ENCODE measurements at regions of chr9 and their contacts with region 1.

Region 1: GRCh38 chr9:129495534-129496325 is 125.2 kb downstream of the C9orf50 start:
- DNase-seq: peak; percentile 85
- H3K4me3 ChIP-seq: peak overlapping the region in 2 of 3 experiments; percentile 26 to 37
- H3K27ac ChIP-seq: peak overlapping the region; percentile 72
- H3K4me1 ChIP-seq: peaks cover 31% of the 10 kb centered on the region
- H3K27me3 ChIP-seq: no peaks in the 10 kb centered on the region
- CTCF ChIP-seq: no peak
- POLR2A ChIP-seq: no peak

Region 2: DNA sequence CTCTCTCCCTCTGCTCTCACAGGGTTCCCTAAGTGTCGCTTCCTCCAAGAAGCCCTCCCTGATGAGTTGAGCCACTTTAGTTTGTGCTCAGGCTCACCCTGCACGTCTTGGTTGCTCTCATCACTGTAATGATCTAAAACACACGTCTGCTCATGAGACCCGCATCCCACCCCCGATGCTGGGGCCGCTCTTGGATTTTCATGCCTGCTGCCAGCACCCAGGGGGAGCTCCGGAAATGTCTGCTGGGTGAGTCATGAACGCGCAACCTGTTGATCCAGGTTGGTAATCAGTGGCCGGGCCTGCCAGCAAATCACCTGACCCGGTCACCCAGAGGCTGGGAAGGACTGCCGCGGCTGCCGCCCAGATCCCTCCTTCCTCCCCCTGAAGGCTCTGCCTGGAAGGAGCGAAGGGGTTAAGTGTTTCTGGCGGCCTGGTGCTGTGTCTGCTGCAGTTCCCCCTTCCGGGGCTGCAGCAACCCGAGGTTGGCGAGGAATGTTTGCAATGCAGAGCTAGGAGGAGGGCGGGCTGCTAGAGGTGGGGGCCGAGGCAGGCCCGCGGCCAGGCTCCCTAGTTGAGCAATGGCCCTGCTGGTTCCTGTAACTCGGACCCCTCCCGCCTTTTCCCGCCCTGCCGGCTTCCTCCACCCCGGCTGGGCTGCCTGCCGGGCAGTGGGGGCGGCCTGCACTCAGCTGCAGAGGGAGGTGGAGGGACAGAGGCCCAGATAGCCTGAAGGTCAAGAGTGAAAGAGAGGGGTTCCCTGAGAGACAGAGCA is 161.6 kb before region 1 on chr9:
- CTCF ChIA-PET with region 1: no interaction called
- POLR2A ChIA-PET with region 1: interaction called, 4 read pairs
- dilution Hi-C with region 1: no loop called
- intact Hi-C with region 1: loop called (anchors 1 kb)
- DNase-seq: peak; percentile 49
- H3K4me3 ChIP-seq: no peak overlapping the region
- H3K27ac ChIP-seq: peak overlapping the region; percentile 20
- H3K4me1 ChIP-seq: peaks cover 19% of the 10 kb centered on the region
- H3K27me3 ChIP-seq: no peaks in the 10 kb centered on the region
- CTCF ChIP-seq: no peak
- POLR2A ChIP-seq: no peak

Region 3: GRCh38 chr9:129413537-129414376 is 82.0 kb before region 1 on chr9:
- CTCF ChIA-PET with region 1: no interaction called
- POLR2A ChIA-PET with region 1: no interaction called
- dilution Hi-C with region 1: no loop called
- intact Hi-C with region 1: loop called (anchors 2 kb)
- DNase-seq: peak; percentile 95
- H3K4me3 ChIP-seq: peak overlapping the region in 1 of 3 experiments; percentile 35
- H3K27ac ChIP-seq: peak overlapping the region; percentile 96
- H3K4me1 ChIP-seq: peaks cover 15% of the 10 kb centered on the region
- H3K27me3 ChIP-seq: no peaks in the 10 kb centered on the region
- CTCF ChIP-seq: no peak
- POLR2A ChIP-seq: peak; percentile 70

Region 4: DNA sequence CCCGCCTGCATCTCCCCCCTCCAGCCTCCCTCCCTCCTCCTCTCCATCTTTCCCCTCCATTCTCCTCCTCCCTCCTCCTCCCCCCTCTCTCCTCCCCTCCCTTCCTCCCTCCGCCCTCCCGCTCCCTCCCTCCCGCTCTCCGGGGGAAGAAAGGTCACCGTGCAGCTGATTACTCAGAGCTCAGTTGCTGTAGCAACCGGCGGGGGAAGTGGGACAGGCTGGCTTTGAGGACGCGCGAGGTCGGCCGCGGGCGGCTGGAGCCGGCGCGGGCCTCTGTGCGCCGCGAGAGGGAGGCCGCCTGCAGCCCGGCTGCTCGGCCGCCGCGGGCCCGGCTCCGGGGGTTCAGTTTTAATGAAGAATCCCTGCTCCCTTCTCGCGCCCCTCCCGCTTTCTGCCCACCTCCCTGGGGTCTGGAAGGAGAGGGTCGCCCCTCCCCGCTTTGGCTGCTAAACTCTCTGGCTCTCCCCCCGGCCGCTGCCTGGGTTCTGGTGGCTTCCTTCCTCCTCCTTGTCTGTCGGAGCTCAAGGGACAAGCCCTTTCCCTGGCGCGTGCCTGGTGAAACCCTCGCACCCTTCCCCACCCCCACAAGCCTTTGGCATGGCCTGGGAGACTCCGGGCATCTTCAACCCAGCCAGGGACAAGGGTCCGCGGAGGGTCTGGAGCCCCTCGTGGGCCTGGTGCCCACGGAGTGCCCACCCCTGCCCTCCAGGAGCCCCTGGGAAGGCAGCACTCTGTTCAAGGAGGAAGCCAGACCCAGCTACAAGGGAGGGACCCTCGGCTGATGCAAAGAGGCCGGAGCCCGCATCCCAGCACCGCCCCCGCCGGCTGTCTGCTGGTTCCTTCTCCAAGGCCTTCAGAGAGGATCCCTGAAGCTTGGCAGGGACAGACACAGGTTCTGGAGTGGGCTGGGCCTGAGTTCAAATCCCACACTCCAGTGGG is 35.1 kb before region 1 on chr9:
- CTCF ChIA-PET with region 1: interaction called, 10 read pairs
- POLR2A ChIA-PET with region 1: interaction called, 4 read pairs
- dilution Hi-C with region 1: no loop called
- intact Hi-C with region 1: no loop called
- DNase-seq: peak; percentile 96
- H3K4me3 ChIP-seq: peak overlapping the region in 2 of 3 experiments; percentile 16 to 18
- H3K27ac ChIP-seq: peak overlapping the region; percentile 98
- H3K4me1 ChIP-seq: peaks cover 11% of the 10 kb centered on the region
- H3K27me3 ChIP-seq: no peaks in the 10 kb centered on the region
- CTCF ChIP-seq: no peak
- POLR2A ChIP-seq: no peak

Region 5: DNA sequence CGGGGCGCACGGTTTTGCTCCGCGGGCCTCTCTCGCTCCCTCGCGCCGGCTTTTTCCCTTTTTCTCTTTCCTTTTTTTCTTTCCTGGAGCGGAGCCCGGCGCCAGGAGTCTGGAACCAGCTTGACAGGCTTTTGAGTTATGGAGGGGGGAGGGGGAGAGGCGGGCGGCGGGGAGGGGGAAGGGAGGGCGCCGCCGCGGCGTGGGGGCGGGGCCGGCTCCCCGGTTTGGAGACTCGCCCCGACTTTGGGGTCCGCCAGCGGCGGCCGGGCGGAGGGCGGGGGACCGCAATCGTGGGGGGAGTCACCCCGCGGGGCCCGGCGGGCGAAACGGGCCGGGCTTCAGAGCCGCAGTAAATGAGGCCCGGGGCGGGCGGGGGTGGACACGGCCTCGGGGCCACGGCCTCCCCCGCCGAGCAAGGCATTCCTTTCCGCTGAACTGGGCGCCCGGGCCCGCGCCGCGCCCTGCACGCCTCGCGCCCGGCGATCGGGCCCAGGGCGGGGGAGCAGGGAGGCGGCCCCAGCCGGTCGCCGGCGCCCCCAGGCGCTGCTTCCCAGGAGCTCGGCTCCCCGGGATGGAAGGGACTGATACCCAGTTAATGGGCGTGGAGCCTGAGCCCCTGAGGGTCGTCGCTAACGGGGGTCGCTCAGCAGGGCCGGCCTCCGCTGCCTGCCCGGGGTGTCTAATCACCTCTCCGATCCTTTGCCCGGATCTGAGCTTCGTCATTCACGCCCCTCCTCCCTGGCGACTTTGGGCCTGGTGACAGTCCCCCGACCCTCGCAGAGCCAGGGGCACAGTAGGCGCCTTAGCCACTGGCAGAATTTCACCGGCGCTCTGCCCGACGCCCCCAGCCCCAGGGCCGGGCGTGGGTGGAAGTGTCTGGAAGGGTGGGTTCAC is 13.0 kb before region 1 on chr9:
- CTCF ChIA-PET with region 1: interaction called, 6 read pairs
- POLR2A ChIA-PET with region 1: interaction called, 7 read pairs
- dilution Hi-C with region 1: no loop called
- intact Hi-C with region 1: loop called (anchors 1 kb)
- DNase-seq: peak; percentile 69
- H3K4me3 ChIP-seq: peak overlapping the region in 1 of 3 experiments; percentile 40
- H3K27ac ChIP-seq: peak overlapping the region; percentile 93
- H3K4me1 ChIP-seq: peaks cover 31% of the 10 kb centered on the region
- H3K27me3 ChIP-seq: no peaks in the 10 kb centered on the region
- CTCF ChIP-seq: no peak
- POLR2A ChIP-seq: no peak

Region 6: DNA sequence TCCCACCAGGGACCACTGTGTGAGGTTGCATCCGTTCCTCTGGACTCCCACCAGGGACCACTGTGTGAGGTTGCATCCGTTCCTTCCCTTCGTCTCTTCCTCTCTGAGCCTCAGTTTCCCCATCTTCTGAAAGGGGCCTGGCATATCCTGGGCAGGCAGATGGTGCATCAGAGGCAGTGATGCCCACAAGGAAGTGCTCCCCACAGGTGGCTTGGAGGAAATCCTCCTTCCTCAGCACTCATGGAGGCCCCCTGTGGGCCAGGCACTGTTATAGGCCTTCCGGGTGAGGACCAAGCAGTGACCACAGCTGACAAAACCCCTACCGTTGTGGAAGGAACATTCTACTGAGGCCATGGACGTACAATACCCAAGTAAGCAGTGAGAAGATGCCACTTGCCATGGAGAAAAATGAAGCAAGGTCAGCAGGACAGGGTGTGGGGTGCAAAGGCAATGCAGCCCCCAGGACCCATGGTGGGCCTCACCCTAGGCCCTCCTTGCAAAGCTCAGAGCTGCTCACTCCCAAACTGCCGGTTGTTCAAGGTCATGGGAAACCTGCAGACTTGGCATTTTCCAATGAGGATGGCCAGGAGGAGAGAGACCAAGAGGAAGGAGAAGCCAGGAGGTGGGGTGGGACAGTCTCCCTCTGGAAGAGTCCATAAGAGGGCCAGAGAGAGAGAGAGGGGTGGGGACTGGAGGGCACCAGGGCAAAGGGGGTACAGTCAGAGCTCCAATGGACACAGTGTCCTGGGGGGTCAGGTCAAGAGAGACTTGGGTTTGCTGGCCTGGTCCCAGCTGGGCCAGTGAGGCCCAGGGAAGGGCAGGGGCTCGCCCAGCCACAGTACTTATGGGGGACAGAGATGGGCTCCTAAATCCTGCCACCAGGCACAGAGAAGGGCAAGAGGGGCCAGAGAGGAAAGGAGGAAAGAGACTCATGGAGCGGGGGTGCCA is 74.0 kb after region 1 on chr9:
- CTCF ChIA-PET with region 1: interaction called, 6 read pairs
- POLR2A ChIA-PET with region 1: interaction called, 14 read pairs
- dilution Hi-C with region 1: no loop called
- intact Hi-C with region 1: loop called (anchors 2 kb)
- DNase-seq: peak; percentile 30
- H3K4me3 ChIP-seq: no peak overlapping the region
- H3K27ac ChIP-seq: no peak overlapping the region
- H3K4me1 ChIP-seq: peaks cover 2% of the 10 kb centered on the region
- H3K27me3 ChIP-seq: no peaks in the 10 kb centered on the region
- CTCF ChIP-seq: peak; percentile 22 to 48
- POLR2A ChIP-seq: no peak

Region 7: DNA sequence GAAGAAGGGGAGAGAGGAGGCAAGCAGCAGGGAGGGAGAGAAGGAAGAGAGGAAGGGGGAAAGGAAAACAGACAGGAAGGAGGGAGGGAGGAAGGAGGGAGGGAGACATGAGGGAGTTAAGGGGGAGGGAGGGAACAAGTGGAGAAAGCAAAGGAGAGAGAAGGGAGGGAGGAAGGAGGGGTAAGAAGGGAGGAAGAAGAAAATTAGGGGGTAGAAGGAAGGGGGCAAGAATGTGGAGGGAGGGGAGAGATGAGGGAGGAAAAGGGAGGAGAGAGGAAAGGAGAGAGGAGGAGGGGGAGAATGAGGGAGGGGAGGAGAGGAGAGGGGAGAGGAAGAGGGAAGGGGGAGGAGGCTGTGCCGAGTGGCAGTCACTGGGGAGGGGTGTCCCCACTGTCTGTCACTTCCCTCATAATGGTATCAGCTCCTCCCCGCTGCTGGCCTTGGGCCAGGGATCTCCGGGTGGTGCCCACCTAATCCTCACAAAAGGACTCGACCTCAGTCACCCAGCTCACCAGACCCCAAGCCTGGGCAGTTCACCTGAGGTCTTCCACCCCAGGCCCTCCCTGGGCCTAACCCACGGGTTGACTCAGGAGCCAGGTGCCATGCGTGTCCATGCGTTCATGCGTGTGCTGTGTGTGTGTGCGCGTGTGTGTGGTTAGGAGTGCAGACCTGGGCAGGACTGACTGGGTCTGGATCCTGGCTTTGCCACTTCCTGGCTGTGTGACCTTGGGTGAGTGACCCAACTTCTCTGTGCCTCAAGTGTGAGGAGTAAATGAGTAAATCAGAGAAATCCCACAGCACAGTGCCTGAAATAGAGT is 107.1 kb after region 1 on chr9:
- CTCF ChIA-PET with region 1: no interaction called
- POLR2A ChIA-PET with region 1: no interaction called
- dilution Hi-C with region 1: no loop called
- intact Hi-C with region 1: loop called (anchors 1 kb)
- DNase-seq: no peak
- H3K4me3 ChIP-seq: no peak overlapping the region
- H3K27ac ChIP-seq: no peak overlapping the region
- H3K4me1 ChIP-seq: peaks cover 9% of the 10 kb centered on the region
- H3K27me3 ChIP-seq: no peaks in the 10 kb centered on the region
- CTCF ChIP-seq: no peak
- POLR2A ChIP-seq: no peak